ENCODE measurements at regions of chr12 and their contacts with region 1.

Region 1: DNA sequence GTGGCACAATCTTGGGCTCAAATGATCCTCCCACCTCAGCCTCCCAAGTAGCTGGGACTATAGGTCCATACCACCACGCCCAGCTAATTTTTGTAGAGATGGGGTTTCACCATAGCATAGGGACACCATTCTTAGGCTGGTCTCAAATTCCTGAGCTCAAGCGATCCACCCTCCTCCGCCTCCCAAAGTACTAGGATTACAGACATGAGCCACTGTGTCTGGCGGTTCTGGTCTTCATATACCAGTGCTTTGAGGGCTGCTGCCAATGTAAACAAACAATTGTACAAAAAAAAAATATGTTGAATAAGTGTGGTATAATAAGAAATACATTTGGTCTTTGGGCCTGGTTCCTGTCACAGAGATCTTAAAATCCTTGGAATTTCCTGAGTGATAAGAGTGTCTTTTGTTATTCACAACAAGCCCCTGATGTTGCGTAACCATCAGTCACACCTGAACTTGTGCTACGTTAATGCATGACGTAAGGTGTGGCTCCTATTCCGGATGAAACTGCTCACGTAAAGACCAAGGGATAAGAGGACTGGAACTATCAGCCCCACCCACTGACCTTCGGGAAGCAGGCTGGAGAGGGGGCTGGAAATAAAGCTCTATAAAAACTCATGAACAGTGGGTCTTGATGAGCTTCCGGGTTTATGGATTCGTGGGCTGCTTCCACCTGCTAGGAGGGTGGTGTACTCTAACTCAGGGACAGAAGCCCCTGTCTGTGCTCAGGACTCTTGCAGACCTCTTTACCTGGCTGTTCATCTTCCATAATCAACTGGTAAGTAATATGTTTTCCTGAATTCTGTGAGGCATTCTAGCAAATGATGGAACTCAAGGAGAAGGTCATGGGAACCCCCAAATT is 16.5 kb upstream of the RIMKLB start:
- DNase-seq: no peak
- ATAC-seq: no peak
- H3K4me3 ChIP-seq: no peak overlapping the region
- H3K4me3 Mint-ChIP-seq: no peak overlapping the region
- H3K27ac ChIP-seq: no peak overlapping the region
- H3K27ac Mint-ChIP-seq: no peak overlapping the region
- H3K4me1 ChIP-seq: no peaks in the 10 kb centered on the region
- H3K4me1 Mint-ChIP-seq: peaks cover 6% of the 10 kb centered on the region
- H3K27me3 ChIP-seq: no peaks in the 10 kb centered on the region
- H3K27me3 Mint-ChIP-seq: peaks cover 9% of the 10 kb centered on the region
- CTCF ChIP-seq: no peak

Region 2: GRCh38 chr12:8108808-8109398 is 572.4 kb before region 1 on chr12:
- CTCF ChIA-PET with region 1: no interaction called
- POLR2A ChIA-PET with region 1: no interaction called
- intact Hi-C with region 1: no loop called
- DNase-seq: peak; percentile 79
- ATAC-seq: peak; percentile 79
- H3K4me3 ChIP-seq: no peak overlapping the region
- H3K4me3 Mint-ChIP-seq: no peak overlapping the region
- H3K27ac ChIP-seq: no peak overlapping the region
- H3K27ac Mint-ChIP-seq: no peak overlapping the region
- H3K4me1 ChIP-seq: no peaks in the 10 kb centered on the region
- H3K4me1 Mint-ChIP-seq: no peaks in the 10 kb centered on the region
- H3K27me3 ChIP-seq: no peaks in the 10 kb centered on the region
- H3K27me3 Mint-ChIP-seq: no peaks in the 10 kb centered on the region
- CTCF ChIP-seq: peak; percentile 100

Region 3: DNA sequence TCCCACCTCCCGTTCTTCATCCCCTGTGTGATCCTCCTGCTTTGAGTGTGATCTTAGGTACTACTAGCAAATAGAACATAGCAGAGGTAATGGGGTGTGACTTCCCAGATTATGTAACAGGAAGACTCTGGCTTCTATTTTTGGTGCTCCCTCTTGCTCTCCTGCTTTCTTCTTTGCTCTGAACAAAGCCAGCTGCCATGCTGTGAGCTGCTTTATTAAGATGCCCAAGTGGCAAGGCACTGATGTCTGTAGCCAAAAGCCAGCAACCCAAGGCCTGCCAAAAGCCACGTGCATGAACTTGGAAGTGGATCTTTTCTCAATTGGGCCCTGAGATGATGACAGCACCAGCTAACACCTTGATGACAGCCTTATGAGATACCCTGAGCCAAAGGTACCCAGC is 12.8 kb before region 1 on chr12:
- CTCF ChIA-PET with region 1: interaction called, 11 read pairs
- POLR2A ChIA-PET with region 1: no interaction called
- intact Hi-C with region 1: no loop called
- DNase-seq: no peak
- ATAC-seq: no peak
- H3K4me3 ChIP-seq: no peak overlapping the region
- H3K4me3 Mint-ChIP-seq: no peak overlapping the region
- H3K27ac ChIP-seq: no peak overlapping the region
- H3K27ac Mint-ChIP-seq: no peak overlapping the region
- H3K4me1 ChIP-seq: peaks cover 6 to 11% of the 10 kb centered on the region in 2 donors
- H3K4me1 Mint-ChIP-seq: peaks cover 12% of the 10 kb centered on the region
- H3K27me3 ChIP-seq: no peaks in the 10 kb centered on the region
- H3K27me3 Mint-ChIP-seq: no peaks in the 10 kb centered on the region
- CTCF ChIP-seq: no peak

Region 4: DNA sequence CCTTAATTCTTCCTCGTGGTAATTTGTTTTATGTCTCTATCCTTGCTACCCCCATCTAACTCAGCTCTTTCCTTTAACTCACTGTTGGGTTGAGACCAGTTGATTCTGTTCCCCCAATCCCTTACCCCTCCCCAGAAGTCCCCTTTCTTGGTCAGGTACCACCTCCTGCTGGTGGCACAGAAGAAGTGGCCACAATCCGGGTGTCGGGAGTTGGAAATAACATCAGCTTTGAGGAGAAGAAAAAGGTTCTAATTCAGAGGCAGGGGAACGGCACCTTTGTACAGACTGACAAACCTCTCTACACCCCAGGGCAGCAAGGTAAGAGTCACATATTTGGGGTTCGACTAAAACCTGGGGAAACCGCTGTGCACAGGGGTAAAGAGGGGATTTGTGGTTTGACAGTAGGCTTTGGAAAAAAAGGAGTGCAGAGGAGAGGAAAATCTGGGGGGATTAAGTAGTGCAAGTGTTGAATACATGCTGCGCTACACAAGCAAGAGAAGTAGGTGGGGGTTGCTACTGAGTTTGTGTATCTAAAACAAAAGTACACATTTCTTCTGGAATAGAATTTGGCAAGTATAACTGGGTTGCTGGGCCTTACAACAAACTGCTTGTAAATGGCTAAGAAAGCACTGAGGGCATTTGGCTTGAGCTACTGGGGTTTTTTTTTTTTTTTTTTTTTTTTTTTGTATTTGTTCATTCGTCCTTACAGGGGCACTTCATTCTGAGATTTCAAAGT is 142.5 kb after region 1 on chr12:
- CTCF ChIA-PET with region 1: interaction called, 25 read pairs
- POLR2A ChIA-PET with region 1: no interaction called
- intact Hi-C with region 1: loop called (anchors 1 kb)
- DNase-seq: peak; percentile 27
- ATAC-seq: no peak
- H3K4me3 ChIP-seq: no peak overlapping the region
- H3K4me3 Mint-ChIP-seq: no peak overlapping the region
- H3K27ac ChIP-seq: no peak overlapping the region
- H3K27ac Mint-ChIP-seq: no peak overlapping the region
- H3K4me1 ChIP-seq: no peaks in the 10 kb centered on the region
- H3K4me1 Mint-ChIP-seq: no peaks in the 10 kb centered on the region
- H3K27me3 ChIP-seq: no peaks in the 10 kb centered on the region
- H3K27me3 Mint-ChIP-seq: peaks cover 10% of the 10 kb centered on the region
- CTCF ChIP-seq: peak; percentile 20

Region 5: GRCh38 chr12:8860165-8860961 is 179.1 kb after region 1 on chr12:
- CTCF ChIA-PET with region 1: interaction called, 87 read pairs
- POLR2A ChIA-PET with region 1: no interaction called
- intact Hi-C with region 1: no loop called
- DNase-seq: peak; percentile 44
- ATAC-seq: no peak
- H3K4me3 ChIP-seq: no peak overlapping the region
- H3K4me3 Mint-ChIP-seq: no peak overlapping the region
- H3K27ac ChIP-seq: no peak overlapping the region
- H3K27ac Mint-ChIP-seq: no peak overlapping the region
- H3K4me1 ChIP-seq: no peaks in the 10 kb centered on the region
- H3K4me1 Mint-ChIP-seq: no peaks in the 10 kb centered on the region
- H3K27me3 ChIP-seq: no peaks in the 10 kb centered on the region
- H3K27me3 Mint-ChIP-seq: peaks cover 12% of the 10 kb centered on the region
- CTCF ChIP-seq: peak; percentile 63

Region 6: DNA sequence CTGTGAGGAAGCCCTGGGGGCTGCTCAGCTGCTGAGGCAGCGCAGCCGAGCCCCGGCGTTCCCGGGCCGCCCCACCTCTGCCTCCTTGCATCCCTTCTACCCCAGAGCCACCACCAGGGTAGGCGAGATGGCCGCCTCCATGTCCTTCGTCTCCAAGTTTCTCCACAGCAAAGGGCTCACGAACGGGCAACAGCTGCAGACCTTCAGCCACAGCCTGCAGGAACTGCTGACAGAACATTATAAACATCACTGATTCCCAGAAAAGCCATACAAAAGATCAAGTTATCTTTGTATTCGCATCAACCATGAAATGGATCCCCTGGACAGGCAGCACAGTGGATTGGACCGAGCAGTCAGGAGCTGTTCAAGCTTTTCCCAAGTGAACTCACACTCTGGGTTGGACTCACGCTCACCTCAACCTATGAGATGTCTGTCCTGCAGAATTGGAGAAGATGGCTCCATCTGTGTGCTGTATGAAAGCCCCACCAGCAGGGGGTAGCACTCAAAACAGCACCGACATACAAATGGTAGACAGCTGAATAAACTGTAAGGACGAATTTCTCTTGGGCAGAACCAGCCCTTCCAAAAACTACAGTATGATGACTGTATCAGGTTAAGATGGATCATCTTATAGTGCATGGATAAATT is 453.8 kb after region 1 on chr12:
- CTCF ChIA-PET with region 1: no interaction called
- POLR2A ChIA-PET with region 1: no interaction called
- intact Hi-C with region 1: no loop called
- DNase-seq: no peak
- ATAC-seq: no peak
- H3K4me3 ChIP-seq: no peak overlapping the region
- H3K4me3 Mint-ChIP-seq: no peak overlapping the region
- H3K27ac ChIP-seq: no peak overlapping the region
- H3K27ac Mint-ChIP-seq: no peak overlapping the region
- H3K4me1 ChIP-seq: no peaks in the 10 kb centered on the region
- H3K4me1 Mint-ChIP-seq: no peaks in the 10 kb centered on the region
- H3K27me3 ChIP-seq: no peaks in the 10 kb centered on the region
- H3K27me3 Mint-ChIP-seq: peaks cover 11% of the 10 kb centered on the region
- CTCF ChIP-seq: no peak

Measured in B cell (primary cell).